Activated naive CD4-positive, alpha-beta T cell treated with anti-CD3 and anti-CD28 coated beads, Interleukin-2, amount 10 ng/mL, durations not matched to agents 7 days and 5 days (primary cell): ENCODE measurements at regions of chr5 and their contacts with region 1.

Region 1: DNA sequence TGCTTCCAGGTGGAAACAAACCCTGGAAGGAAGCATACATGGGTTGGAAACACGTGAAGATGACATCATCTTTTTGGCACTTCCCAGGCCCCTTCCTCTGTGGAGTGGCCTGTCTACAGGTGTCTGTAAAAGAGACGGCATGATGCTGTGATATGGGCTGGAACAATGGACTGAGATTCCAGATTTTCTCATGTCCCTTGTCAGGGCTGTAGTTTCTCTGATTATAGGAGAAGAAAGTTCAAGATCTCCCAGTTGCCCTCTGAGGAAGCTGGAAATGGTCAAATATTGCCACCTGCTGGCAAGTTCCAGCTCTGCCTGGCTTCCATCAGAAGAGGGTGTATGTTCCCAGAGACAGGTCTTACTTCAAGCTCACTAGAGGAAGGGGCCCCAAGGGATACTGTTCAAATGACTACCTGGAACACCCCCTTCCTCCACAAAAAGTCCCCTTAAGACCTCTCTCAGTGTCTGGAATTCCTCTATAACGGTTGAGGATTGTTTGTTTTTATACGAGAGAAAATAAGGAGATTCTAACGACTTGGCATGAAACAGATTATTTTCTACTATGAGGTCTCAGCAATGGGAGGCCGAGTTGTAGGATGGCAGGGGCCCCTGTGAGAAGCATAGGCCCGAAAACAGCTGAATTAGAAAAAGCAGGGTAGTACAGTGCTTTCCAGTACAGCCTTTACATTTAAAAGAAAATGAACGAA is 7.3 kb upstream of the ANXA6 start:
- DNase-seq: peak; percentile 88
- H3K4me3 Mint-ChIP-seq: no peak overlapping the region
- H3K27ac Mint-ChIP-seq: no peak overlapping the region
- H3K4me1 Mint-ChIP-seq: peaks cover 7% of the 10 kb centered on the region
- H3K27me3 Mint-ChIP-seq: peaks cover 21% of the 10 kb centered on the region

Region 2: DNA sequence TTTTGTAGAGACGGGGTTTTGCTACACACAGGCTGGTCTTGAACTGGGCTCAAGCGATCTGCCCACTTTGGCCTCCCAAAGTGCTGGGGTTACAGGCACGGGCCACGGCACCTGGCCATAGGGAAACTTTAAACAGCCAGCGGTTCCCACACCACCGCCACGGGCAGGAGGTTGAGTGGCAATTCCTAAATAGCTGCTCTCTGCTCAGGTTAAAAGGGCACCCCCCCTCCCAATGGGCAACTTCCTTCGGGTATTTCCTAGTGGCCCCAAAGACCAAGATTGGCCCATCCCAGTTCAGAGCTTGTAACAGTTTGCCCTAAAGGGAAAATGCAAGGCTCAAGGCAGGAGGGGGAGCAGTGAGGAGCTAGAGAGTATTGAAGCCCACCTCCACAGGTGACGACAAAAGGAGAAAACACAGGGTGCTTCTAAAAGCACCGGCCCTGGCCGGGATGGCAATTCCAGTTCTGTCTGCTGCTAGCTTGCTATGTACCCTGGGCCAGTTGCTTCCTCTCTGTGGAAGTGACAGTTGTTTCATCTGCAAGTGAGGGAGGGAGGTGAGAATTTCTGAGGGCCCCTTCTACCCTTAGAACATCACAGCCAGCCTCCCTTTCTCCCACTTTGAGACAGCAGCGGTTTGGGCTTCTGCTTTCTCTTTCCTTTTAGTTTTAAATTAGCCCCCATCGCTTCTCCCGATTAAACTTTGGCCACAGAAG is 66.9 kb before region 1 on chr5:
- CTCF ChIA-PET with region 1: interaction called, 19 read pairs
- DNase-seq: peak; percentile 35
- H3K4me3 Mint-ChIP-seq: no peak overlapping the region
- H3K27ac Mint-ChIP-seq: peak overlapping the region; percentile 61
- H3K4me1 Mint-ChIP-seq: peaks cover 78% of the 10 kb centered on the region
- H3K27me3 Mint-ChIP-seq: no peaks in the 10 kb centered on the region

Region 3: GRCh38 chr5:151141535-151141934 is 23.3 kb before region 1 on chr5:
- CTCF ChIA-PET with region 1: interaction called, 46 read pairs
- DNase-seq: peak; percentile 71
- H3K4me3 Mint-ChIP-seq: peak overlapping the region; percentile 53
- H3K27ac Mint-ChIP-seq: peak overlapping the region; percentile 53
- H3K4me1 Mint-ChIP-seq: peaks cover 96% of the 10 kb centered on the region
- H3K27me3 Mint-ChIP-seq: no peaks in the 10 kb centered on the region

Region 4: DNA sequence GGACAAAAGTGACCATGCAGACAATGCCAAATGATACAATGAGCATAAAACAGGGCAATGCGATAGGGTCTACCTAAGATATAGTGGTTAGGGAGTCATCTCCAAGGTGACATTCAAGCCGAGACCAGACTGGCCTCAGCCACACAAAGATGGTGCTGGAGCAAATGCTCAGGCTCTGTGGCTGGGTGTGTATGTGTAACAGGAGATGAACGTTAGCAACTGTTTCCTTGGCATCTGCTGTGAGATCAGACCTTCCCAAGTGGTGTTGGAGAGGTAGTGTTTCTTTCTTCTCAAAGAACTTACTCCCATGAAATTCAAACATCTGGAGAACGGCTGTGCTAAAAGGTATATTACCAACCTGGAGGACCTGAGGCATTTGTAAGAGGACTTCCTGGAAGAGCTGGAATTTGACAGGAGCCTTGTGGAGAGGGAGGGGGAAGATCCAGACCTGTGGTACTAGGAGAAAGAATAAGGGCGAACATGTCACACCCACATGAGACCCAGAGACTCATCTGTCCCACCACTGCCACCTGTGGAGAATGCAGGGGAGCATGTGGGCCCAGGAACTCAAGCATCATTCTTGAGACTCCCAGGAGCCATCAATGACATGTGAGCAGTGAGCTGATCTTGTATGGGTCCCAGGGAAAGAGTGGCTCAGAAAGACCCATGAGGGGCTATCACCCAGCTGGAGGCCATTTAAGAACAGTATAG is 14.1 kb after region 1 on chr5:
- CTCF ChIA-PET with region 1: interaction called, 12 read pairs
- DNase-seq: no peak
- H3K4me3 Mint-ChIP-seq: no peak overlapping the region
- H3K27ac Mint-ChIP-seq: no peak overlapping the region
- H3K4me1 Mint-ChIP-seq: peaks cover 2% of the 10 kb centered on the region
- H3K27me3 Mint-ChIP-seq: no peaks in the 10 kb centered on the region

Region 5: GRCh38 chr5:151223469-151224264 is 58.8 kb after region 1 on chr5 and contains the start of gene CCDC69:
- CTCF ChIA-PET with region 1: interaction called, 17 read pairs
- DNase-seq: peak; percentile 69
- H3K4me3 Mint-ChIP-seq: peak within 1 kb of the TSS; percentile 85
- H3K27ac Mint-ChIP-seq: peak within 1 kb of the TSS; percentile 88
- H3K4me1 Mint-ChIP-seq: peaks cover 61% of the 10 kb centered on the region
- H3K27me3 Mint-ChIP-seq: no peaks in the 10 kb centered on the region

Region 6: GRCh38 chr5:151270599-151270998 is 105.8 kb after region 1 on chr5:
- CTCF ChIA-PET with region 1: no interaction called
- DNase-seq: no peak
- H3K4me3 Mint-ChIP-seq: no peak overlapping the region
- H3K27ac Mint-ChIP-seq: no peak overlapping the region
- H3K4me1 Mint-ChIP-seq: no peaks in the 10 kb centered on the region
- H3K27me3 Mint-ChIP-seq: no peaks in the 10 kb centered on the region